ENCODE measurements at regions of chr4 and their contacts with region 1.

Region 1: GRCh38 chr4:8176547-8177399 is 18.2 kb upstream of the ABLIM2 start:
- DNase-seq: peak; percentile 51
- H3K4me3 ChIP-seq: no peak overlapping the region
- H3K27ac ChIP-seq: no peak overlapping the region
- H3K4me1 ChIP-seq: peaks cover 2% of the 10 kb centered on the region
- H3K27me3 ChIP-seq: no peaks in the 10 kb centered on the region
- CTCF ChIP-seq: peak; percentile 96 to 98

Region 2: DNA sequence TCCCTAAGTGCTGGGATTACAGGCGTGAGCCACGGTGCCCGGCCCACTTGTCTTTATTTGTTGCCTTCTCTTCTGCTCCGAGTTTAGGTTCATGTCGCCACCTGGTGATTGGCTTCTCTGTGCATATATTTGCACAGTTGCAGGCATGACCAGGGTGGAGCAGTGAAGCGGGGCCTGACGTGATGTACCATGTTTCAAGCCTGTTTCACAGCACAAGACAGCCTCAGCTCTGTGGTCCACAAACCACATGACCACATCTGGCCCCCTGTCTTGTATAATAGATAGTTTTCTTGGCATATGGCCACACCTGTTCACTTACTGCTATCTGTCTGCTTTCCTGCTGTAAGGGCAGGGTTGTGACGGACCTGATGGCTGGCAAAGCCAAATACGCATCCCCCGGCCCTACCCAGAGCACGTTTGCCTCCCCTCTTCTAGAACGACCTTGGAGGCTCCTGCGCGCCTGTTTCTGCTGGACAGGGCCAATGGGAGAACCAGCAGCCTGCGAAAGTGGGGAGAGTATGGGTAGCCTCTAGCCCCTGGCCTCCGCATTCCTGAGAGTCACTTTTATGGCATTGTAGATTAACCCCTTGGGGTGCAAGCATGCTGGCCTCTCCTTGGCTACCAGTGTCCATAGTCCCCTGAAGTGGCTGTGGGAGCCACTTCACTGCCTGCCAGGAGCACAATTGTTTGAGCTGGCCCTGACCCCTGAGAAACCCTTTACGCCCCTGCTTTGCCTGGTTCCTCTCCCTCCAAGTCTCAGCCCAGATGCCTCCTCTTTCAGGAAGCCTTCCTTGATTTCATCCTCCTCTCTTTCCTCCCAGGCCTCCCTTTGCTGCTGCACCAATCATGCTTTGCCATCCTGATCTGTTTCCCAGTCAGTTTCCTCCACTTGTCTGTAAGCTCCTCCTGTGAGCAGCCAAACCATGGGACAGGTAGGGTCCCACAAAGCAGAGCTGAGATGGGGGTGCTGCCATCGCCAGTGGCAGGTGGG is 16.3 kb after region 1 on chr4:
- CTCF ChIA-PET with region 1: interaction called, 9 read pairs
- dilution Hi-C with region 1: no loop called
- in situ Hi-C with region 1: no loop called
- intact Hi-C with region 1: loop called (anchors 1 kb)
- DNase-seq: no peak
- H3K4me3 ChIP-seq: no peak overlapping the region
- H3K27ac ChIP-seq: no peak overlapping the region
- H3K4me1 ChIP-seq: peaks cover 36% of the 10 kb centered on the region
- H3K27me3 ChIP-seq: no peaks in the 10 kb centered on the region
- CTCF ChIP-seq: peak; percentile 6 to 48

Region 3: GRCh38 chr4:8221476-8221875 is 44.7 kb after region 1 on chr4:
- CTCF ChIA-PET with region 1: no interaction called
- dilution Hi-C with region 1: loop called (anchors 5 kb)
- in situ Hi-C with region 1: no loop called
- intact Hi-C with region 1: no loop called
- DNase-seq: no peak
- H3K4me3 ChIP-seq: no peak overlapping the region
- H3K27ac ChIP-seq: no peak overlapping the region
- H3K4me1 ChIP-seq: no peaks in the 10 kb centered on the region
- H3K27me3 ChIP-seq: no peaks in the 10 kb centered on the region
- CTCF ChIP-seq: no peak

Region 4: GRCh38 chr4:8228319-8229250 is 51.8 kb after region 1 on chr4:
- CTCF ChIA-PET with region 1: no interaction called
- dilution Hi-C with region 1: loop called (anchors 5 kb)
- in situ Hi-C with region 1: no loop called
- intact Hi-C with region 1: loop called (anchors 2 kb)
- DNase-seq: peak; percentile 95
- H3K4me3 ChIP-seq: no peak overlapping the region
- H3K27ac ChIP-seq: peak overlapping the region; percentile 54
- H3K4me1 ChIP-seq: peaks cover 19% of the 10 kb centered on the region
- H3K27me3 ChIP-seq: no peaks in the 10 kb centered on the region
- CTCF ChIP-seq: peak in 1 of 2 donors; percentile 7

Region 5: DNA sequence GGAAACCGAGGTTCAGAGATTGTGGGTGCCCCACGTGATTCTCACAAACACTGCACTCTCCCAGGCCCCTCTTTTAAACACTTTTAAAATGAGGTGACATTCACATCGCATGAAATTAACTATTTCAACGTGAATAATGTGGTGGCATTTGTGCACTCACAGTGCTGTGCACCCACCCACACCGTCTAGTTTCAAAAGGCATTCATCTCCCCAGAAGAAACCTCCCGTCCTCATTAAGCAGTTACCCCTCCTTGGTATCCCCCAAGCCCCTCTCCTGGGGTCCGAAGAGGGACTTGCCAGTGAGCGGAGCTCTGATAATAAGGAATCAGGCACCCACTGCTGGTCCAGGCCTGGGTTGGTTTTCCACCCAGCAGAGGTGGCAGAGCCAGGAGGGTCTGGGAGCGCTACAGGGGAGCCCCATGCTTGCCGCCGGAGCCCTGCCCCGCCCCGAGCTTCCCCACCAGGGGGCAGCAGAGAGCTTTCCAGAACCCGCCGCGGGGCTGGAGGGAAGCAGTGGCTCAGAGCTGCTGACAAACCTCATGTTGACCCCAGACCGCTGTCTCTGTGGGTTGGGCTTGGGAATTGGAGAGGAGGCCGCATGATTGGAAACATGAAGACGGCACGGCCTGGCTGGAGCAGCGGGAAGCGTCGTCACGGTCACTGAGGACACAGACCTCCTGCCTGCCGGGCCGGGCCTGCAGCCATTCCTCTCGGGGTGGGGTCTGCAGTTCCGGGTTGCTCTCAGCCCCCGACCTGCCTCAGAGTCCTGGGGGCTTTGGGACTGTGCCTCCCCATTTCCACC is 65.3 kb after region 1 on chr4:
- CTCF ChIA-PET with region 1: interaction called, 3 read pairs
- dilution Hi-C with region 1: no loop called
- in situ Hi-C with region 1: no loop called
- intact Hi-C with region 1: loop called (anchors 2 kb)
- DNase-seq: peak; percentile 39
- H3K4me3 ChIP-seq: no peak overlapping the region
- H3K27ac ChIP-seq: no peak overlapping the region
- H3K4me1 ChIP-seq: peaks cover 4% of the 10 kb centered on the region
- H3K27me3 ChIP-seq: no peaks in the 10 kb centered on the region
- CTCF ChIP-seq: peak; percentile 75 to 95

Region 6: DNA sequence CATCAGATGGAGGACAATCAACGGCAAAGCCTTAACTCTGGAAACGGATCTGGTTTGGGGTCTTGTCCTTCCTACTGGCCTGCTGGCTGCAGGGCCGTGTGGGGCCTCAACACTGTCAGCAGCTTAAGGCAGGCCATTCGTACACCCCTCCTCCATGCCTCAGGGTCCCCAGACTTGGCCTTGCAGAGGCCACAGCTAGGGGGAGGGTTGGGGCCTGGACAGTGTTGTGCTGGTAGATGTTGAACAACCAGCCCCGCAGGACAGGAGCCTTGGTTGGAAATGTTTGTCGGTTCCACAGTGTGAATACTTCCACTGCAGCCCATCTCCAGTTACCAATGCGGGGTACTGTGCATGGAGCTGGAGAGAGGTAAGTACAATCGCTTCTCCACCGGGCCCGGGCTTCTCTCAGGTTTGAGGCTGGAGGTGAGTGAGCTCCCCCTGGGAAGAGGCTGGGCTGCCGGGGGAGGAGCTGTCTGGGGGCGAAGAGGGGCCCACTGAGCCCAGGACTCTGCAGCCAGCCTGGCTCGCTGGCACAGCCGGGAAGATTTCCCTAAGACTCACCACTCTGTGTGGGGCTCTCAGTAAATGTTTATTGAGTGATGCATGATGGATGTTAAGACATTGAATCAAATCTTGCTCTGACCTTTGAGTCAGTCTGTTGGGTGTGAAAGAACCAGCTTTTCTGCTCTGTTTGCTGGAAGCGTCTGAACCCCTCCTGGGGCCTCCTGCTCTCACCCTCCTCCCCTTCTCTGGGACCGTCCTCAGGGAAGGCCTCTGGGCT is 383.7 kb after region 1 on chr4:
- CTCF ChIA-PET with region 1: no interaction called
- dilution Hi-C with region 1: no loop called
- in situ Hi-C with region 1: no loop called
- intact Hi-C with region 1: no loop called
- DNase-seq: no peak
- H3K4me3 ChIP-seq: no peak overlapping the region
- H3K27ac ChIP-seq: no peak overlapping the region
- H3K4me1 ChIP-seq: no peaks in the 10 kb centered on the region
- H3K27me3 ChIP-seq: no peaks in the 10 kb centered on the region
- CTCF ChIP-seq: no peak

Measured in mammary epithelial cell (primary cell).